ENCODE measurements at regions of chr1 and their contacts with region 1.

Region 1: GRCh38 chr1:221788466-221788865 is 46.6 kb upstream of the DUSP10 start:
- DNase-seq: no peak

Region 2: GRCh38 chr1:223444437-223444836 is 1656.0 kb after region 1 on chr1:
- intact Hi-C with region 1: loop called in 1 of 2 experiments (anchors 5 kb)
- DNase-seq: no peak

Measured in posterior vena cava (tissue), 2 donors.